ENCODE measurements at regions of chr13 and their contacts with region 1.

Region 1: DNA sequence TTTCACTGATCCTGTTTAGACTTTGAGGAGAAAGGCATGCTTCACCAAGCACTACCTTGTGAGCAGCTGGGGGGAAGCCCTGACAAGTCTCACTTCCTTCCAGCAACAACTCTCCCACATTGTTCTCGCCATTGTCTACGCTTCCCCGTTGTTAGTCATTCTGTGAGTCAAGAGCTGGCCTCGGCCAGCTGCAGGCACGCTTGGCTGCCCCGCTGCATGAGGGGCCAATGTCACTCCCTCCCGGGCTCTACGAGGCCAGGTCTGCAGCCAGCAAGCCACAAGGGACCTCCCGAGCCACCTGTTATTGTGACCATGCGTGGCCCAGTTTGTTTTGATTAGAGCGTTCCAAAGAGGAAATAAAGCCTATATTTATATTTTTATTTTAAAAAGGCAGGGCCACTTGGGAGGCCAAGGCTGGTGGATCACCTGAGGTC is 220.9 kb downstream of the FOXO1 start:
- DNase-seq: peak; percentile 77
- ATAC-seq: peak; percentile 24

Region 2: DNA sequence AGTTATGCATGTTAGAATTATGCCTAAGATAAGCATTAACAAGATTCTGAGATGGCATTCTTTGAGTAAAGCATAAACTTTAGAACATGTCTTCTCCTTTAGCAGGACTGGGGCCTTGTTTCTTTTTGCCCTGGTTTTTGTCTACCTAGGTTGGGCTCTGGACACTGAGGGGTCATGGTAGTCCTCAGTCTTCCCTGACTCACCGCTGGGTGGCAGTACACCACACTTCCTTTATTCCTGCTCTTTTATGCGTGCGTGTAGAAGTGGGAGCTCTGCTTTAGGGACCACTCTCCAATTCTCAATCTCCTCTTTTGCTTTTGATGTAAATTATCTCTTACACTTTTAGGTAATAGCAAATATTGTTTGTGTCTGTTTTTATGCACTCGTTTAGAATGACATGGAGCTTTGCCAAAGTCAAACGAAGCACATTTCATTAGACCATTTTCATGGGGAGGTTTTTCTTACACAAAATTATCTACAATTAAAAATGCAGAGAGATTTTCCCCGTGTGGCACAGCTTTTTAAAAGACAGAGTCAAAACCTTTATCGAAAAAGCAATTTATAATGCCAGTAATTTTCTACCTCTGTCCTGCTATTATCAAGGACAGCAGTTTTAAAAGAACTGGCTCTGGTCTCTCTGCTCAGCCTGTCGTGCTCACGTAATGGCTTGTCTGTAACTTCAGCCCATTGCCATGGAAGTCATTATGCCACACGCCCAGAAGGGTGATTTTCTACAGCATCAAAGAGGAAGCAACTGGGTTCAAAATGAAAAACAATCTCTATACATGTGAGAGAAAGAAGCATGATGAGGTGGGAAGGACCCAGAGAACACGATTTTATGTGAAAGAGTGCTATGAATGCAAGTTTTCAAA is 376.2 kb before region 1 on chr13:
- intact Hi-C with region 1: loop called (anchors 2 kb)
- DNase-seq: no peak
- ATAC-seq: peak; percentile 96

Region 3: DNA sequence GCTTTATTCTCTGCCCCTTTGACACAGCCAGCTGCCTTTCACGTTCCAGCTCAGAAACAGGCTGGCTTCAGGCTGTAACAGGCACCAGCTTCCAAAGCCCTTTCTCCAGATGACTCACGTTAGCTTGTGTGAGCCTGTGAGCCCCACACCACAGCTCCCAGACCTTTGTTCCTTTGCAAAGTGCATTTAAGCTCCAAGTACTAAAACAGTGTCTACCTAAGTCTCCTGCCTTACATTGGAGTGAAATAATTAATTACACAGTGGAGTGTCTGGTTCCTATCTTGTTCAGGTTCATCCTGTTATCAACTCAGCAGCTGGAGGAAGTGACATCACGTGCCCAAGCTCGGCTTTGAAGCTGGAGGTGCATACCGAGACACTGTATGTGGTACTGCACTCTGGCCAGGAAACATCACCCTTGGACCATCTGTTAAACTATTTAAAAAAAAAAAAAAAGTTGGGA is 254.9 kb before region 1 on chr13:
- intact Hi-C with region 1: loop called (anchors 5 kb)
- DNase-seq: no peak
- ATAC-seq: peak; percentile 50

Region 4: DNA sequence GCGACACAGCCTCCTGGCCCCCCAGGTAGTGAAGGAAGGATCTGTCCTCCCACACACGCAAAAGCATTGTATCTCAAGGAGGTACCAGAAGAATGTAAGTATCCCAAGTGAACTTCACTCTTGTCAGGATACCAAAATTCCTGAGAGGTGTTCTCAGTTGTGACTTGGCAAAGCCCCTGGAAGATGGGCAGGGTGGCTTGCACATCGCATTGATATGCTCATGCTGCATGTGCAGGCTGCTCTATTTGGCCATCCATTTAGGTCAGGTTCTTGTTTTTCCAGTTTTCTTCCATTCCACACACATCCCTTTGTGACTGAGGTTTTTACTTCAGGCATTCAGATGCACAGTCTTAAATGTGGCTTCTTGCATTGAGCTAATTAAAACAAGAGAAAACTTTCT is 161.9 kb before region 1 on chr13:
- intact Hi-C with region 1: no loop called
- DNase-seq: no peak
- ATAC-seq: no peak

Region 5: GRCh38 chr13:40401911-40402776 is 43.4 kb before region 1 on chr13:
- intact Hi-C with region 1: loop called (anchors 2 kb)
- DNase-seq: peak; percentile 98
- ATAC-seq: peak; percentile 97

Region 6: GRCh38 chr13:40536443-40537113 is 91.0 kb after region 1 on chr13:
- intact Hi-C with region 1: no loop called
- DNase-seq: no peak
- ATAC-seq: no peak

Region 7: DNA sequence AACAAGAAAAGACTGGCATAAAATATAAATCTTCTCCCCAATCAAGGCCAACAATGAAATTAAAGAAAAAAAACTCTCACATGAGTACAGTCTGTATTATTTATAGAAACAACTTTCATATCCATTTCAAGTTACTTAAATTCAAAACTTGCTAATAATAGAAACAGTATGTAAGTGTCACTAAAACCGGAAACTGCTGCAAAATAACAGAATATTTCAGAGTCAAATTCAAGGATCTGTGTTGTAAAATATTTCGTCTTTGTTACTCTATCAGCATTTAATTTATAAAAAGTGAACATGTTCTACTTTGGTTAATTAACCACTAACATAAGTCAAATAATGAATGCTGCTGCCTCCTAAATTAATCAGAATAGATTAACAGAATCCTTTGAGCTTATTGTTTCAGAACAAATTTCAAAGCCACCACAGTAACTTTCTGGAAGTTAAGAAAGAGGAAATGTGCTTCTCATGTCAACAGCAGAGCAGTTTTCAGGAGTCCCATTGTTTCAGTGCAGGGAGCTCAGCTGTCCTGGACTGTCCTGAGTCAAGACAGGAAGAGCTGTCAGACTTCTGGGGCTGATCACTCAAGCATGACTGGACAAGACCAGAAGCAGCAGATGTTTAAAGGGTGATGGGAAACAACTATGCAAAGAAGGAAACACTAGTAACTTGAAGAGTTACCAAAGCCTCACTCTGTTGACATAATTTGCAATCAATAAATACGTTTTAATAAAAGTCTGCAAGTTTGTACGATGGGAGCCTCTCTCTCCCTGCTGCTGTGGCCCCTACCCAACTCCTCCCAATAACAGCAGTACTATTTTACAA is 143.9 kb after region 1 on chr13:
- intact Hi-C with region 1: loop called (anchors 5 kb)
- DNase-seq: no peak
- ATAC-seq: peak; percentile 77